Psoas muscle (tissue), 8 donors: ENCODE measurements at regions of chr1 and their contacts with region 1.

Region 1: GRCh38 chr1:43763497-43763973 is 56.2 kb downstream of the ST3GAL3 start:
- DNase-seq: peak; percentile 40 to 56
- ATAC-seq: peak; percentile 88 to 96 (median 92)
- H3K4me3 ChIP-seq: no peak overlapping the region
- H3K27ac ChIP-seq: no peak overlapping the region
- H3K4me1 ChIP-seq: peaks cover 20% of the 10 kb centered on the region
- H3K27me3 ChIP-seq: no peaks in the 10 kb centered on the region
- CTCF ChIP-seq: peak; percentile 86

Region 2: DNA sequence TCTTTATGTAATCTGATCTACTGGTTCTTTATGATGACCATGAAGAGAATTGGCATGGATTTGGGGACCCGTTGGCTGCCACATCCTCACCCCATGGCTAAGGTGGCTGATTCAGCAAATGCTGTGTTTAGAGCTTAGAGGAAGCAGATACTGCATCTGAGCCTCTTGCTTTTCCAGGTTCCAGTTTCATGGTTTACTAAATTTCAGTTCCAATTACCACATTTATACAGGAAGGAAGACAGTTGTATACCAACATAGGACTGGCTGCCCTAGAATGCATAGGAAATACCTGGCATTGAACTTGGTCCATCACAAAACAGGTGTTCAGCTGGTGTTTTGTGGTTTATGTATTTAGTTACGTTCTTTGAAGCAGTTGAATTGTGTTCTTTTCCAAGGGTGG is 50.9 kb after region 1 on chr1:
- intact Hi-C with region 1: no loop called
- DNase-seq: no peak
- ATAC-seq: no peak
- H3K4me3 ChIP-seq: no peak overlapping the region
- H3K27ac ChIP-seq: no peak overlapping the region
- H3K4me1 ChIP-seq: no peaks in the 10 kb centered on the region
- H3K27me3 ChIP-seq: no peaks in the 10 kb centered on the region
- CTCF ChIP-seq: no peak

Region 3: GRCh38 chr1:43868741-43869067 is 105.2 kb after region 1 on chr1:
- intact Hi-C with region 1: loop called in 1 of 2 experiments (anchors 10 kb)
- DNase-seq: no peak
- ATAC-seq: peak; percentile 64 to 83 (median 73)
- H3K4me3 ChIP-seq: no peak overlapping the region
- H3K27ac ChIP-seq: peak overlapping the region; percentile 61
- H3K4me1 ChIP-seq: peaks cover 67% of the 10 kb centered on the region
- H3K27me3 ChIP-seq: no peaks in the 10 kb centered on the region
- CTCF ChIP-seq: no peak

Region 4: DNA sequence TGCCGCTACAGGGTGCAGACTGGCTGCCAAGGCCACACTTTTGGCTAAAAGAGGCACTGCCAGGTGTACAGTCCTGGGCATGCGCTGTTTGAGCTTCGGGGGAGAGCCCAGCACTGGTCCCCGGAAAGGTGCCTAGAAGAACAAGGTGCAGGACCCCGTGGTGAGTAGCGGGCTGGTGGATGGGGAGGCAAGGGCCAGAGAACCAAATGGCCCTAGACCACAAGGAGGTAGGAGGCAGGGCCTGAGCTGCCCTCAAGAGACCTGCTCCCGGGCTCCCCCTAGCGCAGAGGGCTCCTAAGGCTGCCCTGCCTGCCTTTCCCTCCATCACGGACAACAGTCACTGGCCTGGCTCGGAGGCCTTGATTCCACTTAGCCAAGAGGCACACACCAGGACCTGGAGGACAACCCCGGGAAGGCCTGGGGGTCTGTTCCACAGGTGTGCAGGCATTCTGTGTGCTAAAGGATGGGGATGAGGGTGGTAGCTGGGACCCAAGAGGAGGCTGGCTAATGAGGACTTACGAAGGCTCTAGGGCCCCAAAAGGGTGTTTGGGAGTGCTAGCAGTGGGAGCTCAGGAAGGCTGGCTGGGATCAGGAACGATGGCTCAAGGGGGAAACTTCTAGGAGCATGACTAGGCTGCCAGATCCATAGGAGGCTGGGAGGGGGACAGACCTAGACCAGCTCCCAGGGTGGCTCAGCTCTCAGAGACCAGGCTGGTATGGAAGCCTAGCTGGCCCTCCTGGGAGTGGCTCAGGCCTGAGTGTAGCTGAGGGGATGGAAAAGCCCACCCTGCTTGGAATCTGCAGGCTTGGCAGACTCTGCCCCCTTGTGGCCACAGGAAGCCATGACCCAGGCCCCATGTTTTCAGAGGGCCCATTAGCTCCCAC is 170.8 kb after region 1 on chr1:
- intact Hi-C with region 1: loop called (anchors 1 to 2 kb)
- DNase-seq: peak; percentile 72 to 87
- ATAC-seq: peak; percentile 79 to 86 (median 79)
- H3K4me3 ChIP-seq: peak overlapping the region; percentile 61
- H3K27ac ChIP-seq: peak overlapping the region; percentile 50
- H3K4me1 ChIP-seq: peaks cover 25% of the 10 kb centered on the region
- H3K27me3 ChIP-seq: peaks cover 0 to 4% (median 0%) of the 10 kb centered on the region in 3 donors
- CTCF ChIP-seq: peak; percentile 79

Region 5: DNA sequence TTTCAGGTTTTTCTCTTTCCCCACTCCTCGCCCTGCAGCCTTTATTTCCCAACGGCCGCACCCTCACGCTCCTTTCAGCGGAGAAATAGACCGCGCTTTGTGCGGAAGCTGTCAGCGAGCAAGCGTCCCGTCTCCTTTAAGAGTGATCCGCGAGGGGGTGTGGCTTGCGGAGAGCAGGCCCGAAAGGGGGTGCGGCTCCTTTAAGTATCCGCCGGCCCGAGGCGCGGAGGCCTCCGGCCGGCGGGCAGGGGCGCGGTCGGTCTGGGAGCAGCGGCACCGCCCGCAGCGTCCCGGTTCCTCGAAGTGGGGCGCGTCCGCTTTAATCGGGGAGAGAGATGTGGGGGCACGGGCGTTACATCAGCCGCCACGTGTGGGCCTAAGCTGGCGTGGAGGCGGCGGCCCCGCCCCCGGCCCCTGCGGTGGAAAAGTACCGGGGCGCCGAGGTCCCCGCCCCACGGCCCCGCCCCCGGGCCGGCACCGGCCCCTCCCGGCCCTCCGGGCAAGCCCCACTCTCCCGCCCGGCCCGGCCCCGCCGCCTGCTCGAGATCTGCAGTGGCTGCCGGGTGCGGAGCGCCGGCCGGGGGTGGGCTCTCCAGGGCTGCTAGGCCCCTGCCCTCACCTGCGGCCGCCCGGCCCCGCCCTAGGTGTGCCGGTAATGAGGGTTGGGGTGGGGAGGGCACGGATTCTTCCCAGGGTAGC is 266.5 kb after region 1 on chr1:
- intact Hi-C with region 1: loop called (anchors 5 to 10 kb)
- DNase-seq: peak; percentile 89 to 93
- ATAC-seq: peak; percentile 92 to 95 (median 93)
- H3K4me3 ChIP-seq: peak overlapping the region; percentile 88
- H3K27ac ChIP-seq: peak overlapping the region; percentile 91
- H3K4me1 ChIP-seq: peaks cover 6% of the 10 kb centered on the region
- H3K27me3 ChIP-seq: no peaks in the 10 kb centered on the region
- CTCF ChIP-seq: no peak

Region 6: DNA sequence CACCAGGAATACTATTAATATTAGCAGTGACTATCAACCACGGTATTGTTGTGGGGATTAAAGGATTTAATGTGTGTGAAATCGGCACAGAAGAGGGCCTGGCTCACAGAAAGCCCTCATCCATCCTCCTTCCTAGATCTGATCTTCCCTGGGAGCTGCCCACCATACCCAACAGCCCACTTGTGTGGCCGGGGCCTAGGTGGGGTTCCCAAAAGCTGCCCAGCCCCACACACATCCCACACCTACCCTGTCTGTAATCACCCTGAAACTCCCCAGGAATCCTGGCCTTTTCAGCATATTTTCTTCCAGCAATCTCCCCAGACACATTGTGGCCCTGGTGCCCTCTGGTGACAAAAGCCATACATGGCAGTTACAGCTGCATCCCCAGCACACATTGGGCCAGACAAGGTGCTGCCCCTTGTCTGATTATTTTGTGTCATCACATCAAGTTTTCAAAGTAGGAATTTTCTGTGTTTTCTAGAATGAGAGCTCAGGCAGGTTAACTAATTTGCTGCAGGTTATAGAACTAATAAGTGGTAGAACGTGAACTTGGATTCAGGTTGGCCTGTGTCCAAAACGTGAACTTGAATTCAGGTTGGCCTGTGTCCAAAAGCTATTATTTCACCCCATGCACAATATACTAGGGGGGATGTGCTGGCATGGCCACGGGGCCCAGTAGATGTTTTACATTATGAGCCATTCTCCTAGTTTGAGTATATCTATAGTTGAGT is 273.0 kb after region 1 on chr1:
- intact Hi-C with region 1: loop called (anchors 5 to 10 kb)
- DNase-seq: peak; percentile 55 to 74
- ATAC-seq: peak; percentile 76 to 91 (median 81)
- H3K4me3 ChIP-seq: no peak overlapping the region
- H3K27ac ChIP-seq: no peak overlapping the region
- H3K4me1 ChIP-seq: peaks cover 18% of the 10 kb centered on the region
- H3K27me3 ChIP-seq: no peaks in the 10 kb centered on the region
- CTCF ChIP-seq: peak; percentile 73